ENCODE measurements at regions of chr10 and their contacts with region 1.

Region 1: DNA sequence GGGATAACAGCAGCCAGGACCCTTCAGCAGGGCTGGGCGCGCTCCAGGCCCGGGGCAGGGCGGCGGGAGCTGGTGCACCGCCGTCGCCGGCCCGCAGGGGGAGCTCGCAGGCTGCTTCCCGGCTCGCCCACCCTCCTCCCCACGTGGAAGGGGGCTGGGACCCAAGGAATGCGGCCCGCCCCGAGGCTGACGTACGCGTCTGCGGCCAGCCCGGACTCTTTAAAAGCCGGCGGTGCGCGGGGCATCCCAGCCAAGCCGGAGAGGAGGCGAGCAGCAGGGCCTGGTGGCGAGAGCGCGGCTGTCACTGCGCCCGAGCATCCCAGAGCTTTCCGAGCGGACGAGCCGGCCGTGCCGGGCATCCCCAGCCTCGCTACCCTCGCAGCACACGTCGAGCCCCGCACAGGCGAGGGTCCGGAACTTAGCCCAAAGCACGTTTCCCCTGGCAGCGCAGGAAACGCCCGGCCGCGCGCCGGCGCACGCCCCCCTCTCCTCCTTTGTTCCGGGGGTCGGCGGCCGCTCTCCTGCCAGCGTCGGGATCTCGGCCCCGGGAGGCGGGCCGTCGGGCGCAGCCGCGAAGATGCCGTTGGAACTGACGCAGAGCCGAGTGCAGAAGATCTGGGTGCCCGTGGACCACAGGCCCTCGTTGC is at the start of gene PFKFB3:
- DNase-seq: peak; percentile 91 to 97
- ATAC-seq: peak; percentile 71 to 78
- H3K4me3 ChIP-seq: peak within 1 kb of the TSS; percentile 70
- H3K27ac ChIP-seq: peak within 1 kb of the TSS; percentile 85 to 97
- H3K4me1 ChIP-seq: peaks cover 10% of the 10 kb centered on the region; the same call in 2 of the 3 replicates
- CTCF ChIP-seq: peak; percentile 92
- EP300 ChIP-seq: peak in 1 of 2 experiments; percentile 41; a peak in 1 of 5 replicates
- POLR2A ChIP-seq: peak; percentile 100
- RAD21 ChIP-seq: peak; percentile 77 to 96
- polyA plus RNA-seq, gene PFKFB3: 139 and 151 TPM in 2 replicates

Region 2: GRCh38 chr10:5764422-5765297 is 438.1 kb before region 1 on chr10:
- CTCF ChIA-PET with region 1: no interaction called
- POLR2A ChIA-PET with region 1: no interaction called
- DNase-seq: no peak
- ATAC-seq: 0 out of 6 replicates have a peak, but pooled peaks of 1 of the 2 experiments have one; percentile 8
- H3K4me3 ChIP-seq: no peak overlapping the region
- H3K27ac ChIP-seq: no peak overlapping the region
- H3K4me1 ChIP-seq: peaks cover 9% of the 10 kb centered on the region; the same call in 1 of the 3 replicates
- CTCF ChIP-seq: no peak
- EP300 ChIP-seq: no peak
- POLR2A ChIP-seq: no peak
- RAD21 ChIP-seq: no peak

Region 3: DNA sequence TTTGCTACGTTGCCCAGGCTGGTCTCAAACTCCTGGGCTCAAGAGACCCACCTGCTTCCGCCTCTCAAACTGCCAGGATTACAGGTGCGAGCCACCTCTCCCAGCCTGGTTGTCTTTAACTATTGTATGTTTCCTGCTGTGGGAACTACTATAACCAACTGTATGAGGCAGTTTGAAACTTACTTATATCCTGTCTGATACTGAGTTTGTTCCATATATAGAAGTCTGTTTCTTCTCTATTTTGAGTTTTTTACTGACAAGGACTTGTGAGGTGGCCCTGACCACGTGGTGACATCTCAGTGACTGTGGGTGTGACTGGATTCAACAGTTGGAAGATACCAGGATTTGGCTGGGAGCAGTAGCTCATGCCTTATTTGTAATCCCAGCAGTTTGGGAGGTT is 298.6 kb before region 1 on chr10:
- CTCF ChIA-PET with region 1: no interaction called
- POLR2A ChIA-PET with region 1: no interaction called
- DNase-seq: no peak
- ATAC-seq: no peak
- H3K4me3 ChIP-seq: no peak overlapping the region
- H3K27ac ChIP-seq: no peak overlapping the region
- H3K4me1 ChIP-seq: no peaks in the 10 kb centered on the region
- CTCF ChIP-seq: no peak
- EP300 ChIP-seq: no peak
- POLR2A ChIP-seq: no peak
- RAD21 ChIP-seq: no peak

Region 4: GRCh38 chr10:6088721-6089390 is 114.0 kb before region 1 on chr10 and contains the start of gene RBM17:
- CTCF ChIA-PET with region 1: interaction called, 12 read pairs
- POLR2A ChIA-PET with region 1: interaction called, 7 read pairs
- DNase-seq: peak; percentile 72 to 97
- ATAC-seq: peak; percentile 85 to 88
- H3K4me3 ChIP-seq: peak within 1 kb of the TSS; percentile 94
- H3K27ac ChIP-seq: peak within 1 kb of the TSS; percentile 95 to 97
- H3K4me1 ChIP-seq: peaks cover 35% of the 10 kb centered on the region
- CTCF ChIP-seq: peak; percentile 100
- EP300 ChIP-seq: no peak; a peak in 1 of 5 replicates
- POLR2A ChIP-seq: peak; percentile 59
- RAD21 ChIP-seq: peak; percentile 64 to 74
- polyA plus RNA-seq, gene RBM17: 68.0 and 75.2 TPM in 2 replicates

Region 5: GRCh38 chr10:6119423-6119822 is 83.4 kb before region 1 on chr10:
- CTCF ChIA-PET with region 1: interaction called, 10 read pairs
- POLR2A ChIA-PET with region 1: interaction called, 3 read pairs
- DNase-seq: no peak
- ATAC-seq: no peak; a peak in 1 of 6 replicates
- H3K4me3 ChIP-seq: no peak overlapping the region
- H3K27ac ChIP-seq: no peak overlapping the region
- H3K4me1 ChIP-seq: peaks cover 15% of the 10 kb centered on the region
- CTCF ChIP-seq: no peak
- EP300 ChIP-seq: no peak
- POLR2A ChIP-seq: no peak
- RAD21 ChIP-seq: no peak

Region 6: DNA sequence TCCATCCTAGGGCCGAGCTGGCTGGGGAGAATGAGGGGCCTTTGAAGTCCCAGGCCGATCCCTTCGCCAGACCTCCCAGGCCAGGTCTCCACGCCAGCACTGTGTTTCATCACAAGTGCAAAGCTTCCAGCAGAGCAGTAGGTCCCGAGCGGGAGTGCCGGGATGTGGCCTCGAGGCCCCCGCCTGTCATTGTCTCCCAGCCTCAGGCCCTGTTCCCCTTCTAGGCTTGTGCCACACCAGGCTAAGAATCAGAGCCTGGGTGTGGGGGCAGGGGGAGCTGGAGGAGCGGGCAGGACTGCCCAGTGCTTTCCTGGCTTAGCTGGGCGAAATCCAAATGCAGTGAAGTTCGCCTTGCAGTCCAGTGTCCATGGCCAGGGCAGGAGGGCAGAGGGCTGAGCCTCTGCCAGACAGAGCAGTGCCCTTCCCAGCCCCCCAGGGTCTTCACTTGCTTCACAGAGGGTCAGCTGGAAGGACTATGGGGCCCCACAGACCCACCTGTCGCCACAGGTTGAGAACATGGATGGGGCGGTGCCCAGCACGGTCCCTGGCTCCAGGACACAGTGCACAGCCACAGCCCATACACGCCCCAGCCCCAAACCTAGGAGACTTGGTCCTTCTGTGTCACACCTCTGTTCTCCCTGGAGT is 20.2 kb before region 1 on chr10:
- CTCF ChIA-PET with region 1: interaction called, 16 read pairs
- POLR2A ChIA-PET with region 1: interaction called, 3 read pairs
- DNase-seq: no peak
- ATAC-seq: peak; percentile 43 to 53; a peak in 3 of 6 replicates
- H3K4me3 ChIP-seq: no peak overlapping the region
- H3K27ac ChIP-seq: peak overlapping the region in 1 of 2 experiments; percentile 14; a peak in 1 of 6 replicates
- H3K4me1 ChIP-seq: 0 out of 3 replicates have a peak, but pooled peaks cover 5% of the 10 kb centered on the region
- CTCF ChIP-seq: no peak
- EP300 ChIP-seq: no peak
- POLR2A ChIP-seq: no peak
- RAD21 ChIP-seq: no peak

Region 7: GRCh38 chr10:6232846-6233724 is 30.3 kb after region 1 on chr10:
- CTCF ChIA-PET with region 1: interaction called, 21 read pairs
- POLR2A ChIA-PET with region 1: interaction called, 16 read pairs
- DNase-seq: no peak
- ATAC-seq: peak in 1 of 2 experiments; percentile 0; a peak in 1 of 6 replicates
- H3K4me3 ChIP-seq: no peak overlapping the region
- H3K27ac ChIP-seq: peak overlapping the region; percentile 55 to 82; a peak in 5 of 6 replicates
- H3K4me1 ChIP-seq: peaks cover 85% of the 10 kb centered on the region
- CTCF ChIP-seq: no peak
- EP300 ChIP-seq: no peak
- POLR2A ChIP-seq: no peak
- RAD21 ChIP-seq: no peak

Region 8: DNA sequence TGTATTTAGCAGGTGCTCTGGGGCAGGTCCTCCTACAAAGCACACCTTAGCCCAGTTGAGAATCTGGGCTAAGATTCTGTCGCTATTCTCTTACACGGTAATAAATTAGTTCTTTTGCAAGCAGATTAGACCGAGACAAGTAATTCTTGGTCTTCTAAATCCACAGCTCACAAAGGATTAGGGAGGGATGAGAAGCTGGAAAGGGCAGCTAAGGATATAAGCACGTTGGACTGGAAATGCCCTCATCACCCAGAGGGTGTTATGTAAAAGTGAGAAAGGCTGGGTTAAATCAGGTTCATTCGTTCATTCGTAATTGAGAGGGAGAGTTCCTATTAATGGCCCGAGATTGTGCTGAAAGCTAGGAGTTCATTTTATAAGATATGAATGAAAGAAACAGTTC is 41.7 kb after region 1 on chr10:
- CTCF ChIA-PET with region 1: interaction called, 17 read pairs
- POLR2A ChIA-PET with region 1: interaction called, 6 read pairs
- DNase-seq: no peak
- ATAC-seq: no peak
- H3K4me3 ChIP-seq: no peak overlapping the region
- H3K27ac ChIP-seq: peak overlapping the region in 1 of 2 experiments; percentile 86; a peak in 3 of 6 replicates
- H3K4me1 ChIP-seq: peaks cover 29% of the 10 kb centered on the region
- CTCF ChIP-seq: no peak
- EP300 ChIP-seq: no peak
- POLR2A ChIP-seq: no peak
- RAD21 ChIP-seq: no peak

Region 9: DNA sequence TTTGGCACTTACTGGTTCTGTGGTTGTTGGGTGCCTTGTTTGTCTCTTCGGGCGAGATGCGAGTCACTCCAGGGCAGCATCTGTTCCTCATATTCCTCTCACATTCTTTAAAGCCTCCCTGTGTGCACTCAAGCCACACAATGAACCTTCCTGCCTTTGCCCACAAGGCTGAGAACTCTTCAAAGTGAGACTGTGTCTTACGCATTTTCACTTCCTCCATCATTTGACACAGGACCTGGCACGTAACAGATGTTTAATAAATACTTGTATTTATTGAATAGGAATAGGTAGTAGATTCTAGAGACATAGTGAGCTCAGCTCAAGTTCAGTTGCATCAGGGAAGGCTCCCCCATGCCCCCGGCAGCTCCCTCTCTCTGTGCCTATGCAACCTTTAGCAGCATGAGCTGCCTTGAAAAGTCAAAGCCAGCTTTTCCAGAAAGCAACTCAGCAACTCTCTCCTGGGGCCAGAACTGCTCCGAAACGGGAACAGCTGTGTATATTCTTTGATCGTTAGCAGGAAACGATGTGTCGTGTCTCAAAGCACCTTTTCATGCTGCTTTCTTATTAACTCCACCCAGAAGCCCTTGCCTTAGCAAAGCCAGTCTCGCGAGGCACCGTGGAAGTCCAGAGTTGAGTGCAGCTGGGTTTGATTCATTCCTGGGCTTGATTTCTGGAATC is 97.4 kb after region 1 on chr10:
- CTCF ChIA-PET with region 1: interaction called, 7 read pairs
- POLR2A ChIA-PET with region 1: interaction called, 12 read pairs
- DNase-seq: peak in 1 of 2 experiments; percentile 63
- ATAC-seq: peak in 1 of 2 experiments; percentile 5; a peak in 2 of 6 replicates
- H3K4me3 ChIP-seq: no peak overlapping the region
- H3K27ac ChIP-seq: peak overlapping the region; percentile 88 to 91
- H3K4me1 ChIP-seq: peaks cover 71% of the 10 kb centered on the region
- CTCF ChIP-seq: no peak
- EP300 ChIP-seq: no peak
- POLR2A ChIP-seq: no peak
- RAD21 ChIP-seq: no peak